Breast epithelium (tissue), 4 donors: ENCODE measurements at regions of chr19 and their contacts with region 1.

Region 1: DNA sequence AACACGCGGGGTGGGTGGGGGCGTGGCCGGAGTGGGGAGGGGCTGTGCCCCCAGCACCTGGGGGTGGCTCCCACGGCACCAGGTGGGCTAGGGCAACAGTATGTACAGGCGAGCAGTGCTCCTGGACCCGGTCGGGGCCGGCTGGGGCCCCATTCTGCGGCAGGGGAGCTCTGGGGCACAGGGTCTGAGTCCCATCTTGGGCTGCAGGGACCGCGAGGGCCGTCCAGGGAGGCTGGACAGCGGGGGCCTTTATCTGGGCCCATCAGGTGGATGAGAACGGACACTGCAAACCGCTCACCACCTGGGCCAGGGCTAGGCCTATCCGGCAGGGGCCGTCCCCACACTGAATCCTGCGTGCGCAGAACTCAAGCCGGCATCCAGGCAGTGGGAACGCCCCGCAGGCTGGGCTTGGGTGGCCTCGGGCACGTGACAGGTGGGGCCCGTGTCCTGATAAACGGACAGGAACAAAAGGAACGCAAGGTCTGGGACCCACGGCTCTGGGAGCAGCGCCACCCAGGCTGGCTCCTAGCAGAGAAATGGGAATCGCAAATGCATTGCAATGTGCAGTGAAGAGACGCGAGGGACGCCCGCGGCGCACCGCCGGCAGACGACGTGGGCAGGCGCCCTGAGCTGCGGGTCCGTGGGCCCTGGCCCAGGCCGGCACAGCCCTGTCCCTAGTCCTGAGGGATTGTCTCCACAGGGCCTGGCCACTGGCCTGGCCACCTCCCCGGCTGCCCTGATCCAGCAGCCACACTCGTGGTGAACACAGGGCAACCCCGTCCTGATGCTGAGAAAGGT is 29.8 kb downstream of the BTBD2 start:
- DNase-seq: no peak
- H3K4me3 ChIP-seq: no peak overlapping the region
- H3K27ac ChIP-seq: no peak overlapping the region
- H3K4me1 ChIP-seq: no peaks in the 10 kb centered on the region
- H3K27me3 ChIP-seq: no peaks in the 10 kb centered on the region
- CTCF ChIP-seq: no peak
- POLR2A ChIP-seq: no peak

Region 2: DNA sequence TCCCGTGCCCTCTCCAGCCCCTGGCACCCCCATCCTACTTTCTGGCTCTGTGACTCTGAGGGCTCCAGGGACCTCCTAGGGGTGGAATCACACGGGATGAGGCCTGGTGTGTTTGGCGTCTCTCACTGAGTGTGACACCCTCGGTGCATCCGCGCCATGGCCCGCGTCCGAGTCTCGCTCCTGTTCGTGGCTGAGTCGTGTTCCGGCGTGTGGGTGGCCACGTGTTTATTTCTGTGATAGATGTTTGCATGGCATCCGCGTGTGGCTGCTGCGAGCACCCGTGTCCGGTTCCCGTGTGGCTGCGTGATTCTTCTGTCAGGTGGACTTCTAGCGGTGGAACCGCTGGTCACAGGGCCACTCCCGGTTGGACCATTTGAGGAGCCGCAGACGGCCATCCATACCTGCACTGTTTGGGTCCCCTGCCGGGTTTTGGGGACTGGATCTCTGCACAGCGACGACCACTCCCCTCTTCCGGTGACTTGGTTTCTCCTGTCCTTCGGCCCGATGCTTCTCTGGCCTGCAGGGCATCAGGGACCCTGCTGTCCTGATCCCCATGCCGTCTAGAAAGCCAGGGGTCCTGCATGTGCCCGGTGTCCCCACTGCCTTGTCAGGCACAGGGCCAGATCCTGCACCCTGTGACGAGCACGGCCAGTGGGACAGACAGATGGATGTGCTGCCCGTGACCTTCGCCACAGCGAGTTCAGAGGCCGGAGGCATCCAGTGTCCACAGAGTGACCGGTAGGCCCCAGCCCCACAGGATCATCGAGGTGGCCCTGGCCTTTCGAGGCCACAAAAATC is 36.3 kb before region 1 on chr19:
- intact Hi-C with region 1: loop called (anchors 1 kb)
- DNase-seq: no peak
- H3K4me3 ChIP-seq: no peak overlapping the region
- H3K27ac ChIP-seq: no peak overlapping the region
- H3K4me1 ChIP-seq: no peaks in the 10 kb centered on the region
- H3K27me3 ChIP-seq: no peaks in the 10 kb centered on the region
- CTCF ChIP-seq: no peak
- POLR2A ChIP-seq: no peak